Activated CD4-positive, alpha-beta T cell treated with anti-CD3 and anti-CD28 coated beads for 36 hours (primary cell): ENCODE measurements at regions of chr1 and their contacts with region 1.

Region 1: GRCh38 chr1:151327223-151327902 is at the start of gene PI4KB:
- DNase-seq: peak; percentile 92
- ATAC-seq: peak; percentile 94
- H3K4me3 Mint-ChIP-seq: peak within 1 kb of the TSS; percentile 92
- H3K27ac Mint-ChIP-seq: peak within 1 kb of the TSS; percentile 95
- H3K4me1 Mint-ChIP-seq: peaks cover 30% of the 10 kb centered on the region
- H3K27me3 Mint-ChIP-seq: no peaks in the 10 kb centered on the region
- total RNA-seq, gene PI4KB: 53.0 to 54.5 TPM

Region 2: GRCh38 chr1:151189638-151190445 is 137.5 kb before region 1 on chr1 and contains the start of gene VPS72:
- CTCF ChIA-PET with region 1: no interaction called
- POLR2A ChIA-PET with region 1: no interaction called
- intact Hi-C with region 1: loop called (anchors 1 to 5 kb)
- DNase-seq: peak; percentile 93
- ATAC-seq: peak; percentile 96
- H3K4me3 Mint-ChIP-seq: peak within 1 kb of the TSS; percentile 96
- H3K27ac Mint-ChIP-seq: peak within 1 kb of the TSS; percentile 98
- H3K4me1 Mint-ChIP-seq: peaks cover 27% of the 10 kb centered on the region
- H3K27me3 Mint-ChIP-seq: no peaks in the 10 kb centered on the region
- total RNA-seq, gene VPS72: 77.1 to 77.8 TPM

Region 3: DNA sequence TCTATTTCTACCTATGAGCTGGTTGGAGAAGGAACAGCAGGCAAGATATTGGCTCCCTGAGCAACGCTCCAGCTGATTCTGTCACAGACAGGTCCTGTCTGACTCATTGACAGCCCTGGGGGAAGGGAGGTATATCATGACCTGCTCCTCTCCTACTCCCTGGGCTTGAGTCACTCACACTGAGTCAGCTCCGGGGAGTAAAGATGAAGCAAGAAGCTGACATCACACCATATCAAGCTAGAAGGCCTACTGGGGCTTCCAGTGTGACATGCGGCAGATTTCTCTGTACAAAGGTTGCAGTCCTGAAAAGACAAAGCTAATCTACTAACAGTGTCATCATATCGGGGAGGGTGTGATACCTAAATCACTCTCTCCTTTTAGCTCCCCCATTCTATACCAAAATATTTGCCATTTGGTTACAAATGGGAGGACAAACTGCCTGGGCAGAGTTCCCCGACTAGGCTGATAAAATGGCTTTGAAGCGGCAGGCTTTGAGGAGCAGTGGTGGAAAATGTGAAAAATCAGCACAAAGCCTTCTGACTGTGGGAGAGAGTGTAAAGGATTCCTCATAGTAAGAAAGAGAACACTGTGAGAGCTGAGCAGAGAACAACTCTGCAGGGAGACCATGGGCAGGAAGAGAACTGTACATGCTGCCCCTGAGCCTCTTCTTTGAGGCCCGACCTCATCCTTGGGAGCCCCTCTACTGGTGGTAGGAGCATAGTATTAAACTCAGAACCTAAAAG is 15.6 kb before region 1 on chr1:
- CTCF ChIA-PET with region 1: interaction called, 76 read pairs
- POLR2A ChIA-PET with region 1: interaction called, 29 read pairs
- intact Hi-C with region 1: loop called (anchors 1 kb)
- DNase-seq: peak; percentile 92
- ATAC-seq: peak; percentile 99
- H3K4me3 Mint-ChIP-seq: peak overlapping the region; percentile 13
- H3K27ac Mint-ChIP-seq: peak overlapping the region; percentile 99
- H3K4me1 Mint-ChIP-seq: peaks cover 41% of the 10 kb centered on the region
- H3K27me3 Mint-ChIP-seq: no peaks in the 10 kb centered on the region

Region 4: DNA sequence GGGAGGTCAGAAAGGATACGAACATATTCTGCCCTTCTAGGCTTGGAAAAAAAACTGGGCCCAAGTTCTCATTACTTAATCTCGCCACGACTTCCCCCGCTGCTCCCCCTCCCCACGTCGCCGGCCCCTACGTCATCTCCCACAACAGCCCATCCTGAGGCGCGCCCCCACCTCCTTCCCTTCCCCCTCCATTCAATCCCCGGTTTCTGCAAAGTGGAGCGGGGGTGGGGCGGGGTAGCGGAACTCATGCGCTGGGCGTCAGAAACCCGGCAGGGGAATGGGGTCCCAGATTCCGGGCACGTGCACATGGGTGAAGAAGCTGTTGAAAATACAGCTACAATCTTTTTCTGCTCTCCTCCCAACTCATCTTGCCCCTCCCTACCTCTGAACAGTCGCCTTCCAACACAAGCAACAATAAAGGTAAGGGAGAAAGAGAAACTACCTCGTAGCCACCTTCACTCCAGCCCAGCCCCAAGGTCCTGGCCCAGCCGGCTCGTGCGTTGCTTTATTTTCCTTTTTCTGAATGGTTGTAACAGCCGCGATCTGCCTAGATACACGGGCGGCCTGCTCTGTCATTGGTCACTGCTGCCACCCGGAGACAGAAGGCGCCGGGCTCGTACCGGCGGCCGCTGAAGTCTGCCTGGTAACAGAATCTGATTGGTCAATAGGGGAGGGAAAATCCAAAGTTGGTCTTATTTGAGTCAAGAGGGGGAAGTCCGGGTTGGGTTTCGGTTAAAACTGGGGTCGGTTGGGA is 19.6 kb after region 1 on chr1 and contains the start of gene RFX5:
- CTCF ChIA-PET with region 1: interaction called, 80 read pairs
- POLR2A ChIA-PET with region 1: interaction called, 3 read pairs
- intact Hi-C with region 1: loop called (anchors 1 kb)
- DNase-seq: peak; percentile 96
- ATAC-seq: peak; percentile 98
- H3K4me3 Mint-ChIP-seq: peak within 1 kb of the TSS; percentile 96
- H3K27ac Mint-ChIP-seq: peak within 1 kb of the TSS; percentile 94
- H3K4me1 Mint-ChIP-seq: peaks cover 31% of the 10 kb centered on the region
- H3K27me3 Mint-ChIP-seq: no peaks in the 10 kb centered on the region
- total RNA-seq, gene RFX5: 47.6 to 50.4 TPM

Region 5: DNA sequence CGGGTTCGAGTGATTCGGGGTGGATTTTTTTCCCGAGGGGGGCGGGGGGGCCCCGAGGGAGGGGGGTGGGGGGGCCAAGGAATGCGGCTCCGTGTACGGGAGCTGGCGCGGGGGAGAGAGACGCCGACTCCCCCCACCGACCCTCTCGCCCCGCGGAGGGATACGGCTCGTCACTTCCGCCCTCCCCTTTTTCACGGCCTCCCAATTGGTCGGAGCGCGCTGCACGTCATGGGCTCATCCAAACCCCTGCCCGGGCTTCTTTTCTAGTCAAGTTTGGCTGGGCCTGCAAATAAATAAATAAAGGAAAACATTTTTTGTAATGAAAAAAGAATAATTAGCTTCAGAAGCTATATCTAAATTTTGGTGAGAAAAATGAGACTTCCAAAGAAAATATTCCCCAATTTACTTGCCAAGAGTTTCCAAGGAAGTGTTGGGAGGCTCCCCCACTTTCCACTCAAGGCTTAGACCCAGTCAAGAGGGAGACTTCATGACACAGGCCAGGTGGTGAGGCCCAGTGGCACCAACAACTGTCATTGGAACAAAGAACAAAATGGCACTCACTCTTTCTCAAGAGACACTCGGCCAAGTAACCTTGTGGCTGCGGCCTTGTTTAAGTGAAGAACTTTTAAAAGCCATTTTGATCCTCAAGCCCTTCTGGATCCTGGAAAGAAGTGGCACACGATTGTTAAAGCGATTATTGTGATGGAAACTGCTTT is 132.1 kb after region 1 on chr1 and contains the start of gene POGZ:
- CTCF ChIA-PET with region 1: no interaction called
- POLR2A ChIA-PET with region 1: no interaction called
- intact Hi-C with region 1: loop called in 1 of 2 experiments (anchors 1 kb)
- DNase-seq: peak; percentile 97
- ATAC-seq: peak; percentile 80
- H3K4me3 Mint-ChIP-seq: peak within 1 kb of the TSS; percentile 83
- H3K27ac Mint-ChIP-seq: peak within 1 kb of the TSS; percentile 94
- H3K4me1 Mint-ChIP-seq: peaks cover 24% of the 10 kb centered on the region
- H3K27me3 Mint-ChIP-seq: peaks cover 19% of the 10 kb centered on the region
- total RNA-seq, gene POGZ: 81.3 to 104 TPM

Region 6: GRCh38 chr1:151762941-151763921 is 435.9 kb after region 1 on chr1 and contains the start of gene MRPL9:
- CTCF ChIA-PET with region 1: no interaction called
- POLR2A ChIA-PET with region 1: no interaction called
- intact Hi-C with region 1: loop called in 1 of 2 experiments (anchors 2 kb)
- DNase-seq: peak; percentile 94
- ATAC-seq: peak; percentile 99
- H3K4me3 Mint-ChIP-seq: peak within 1 kb of the TSS; percentile 89
- H3K27ac Mint-ChIP-seq: peak within 1 kb of the TSS; percentile 95
- H3K4me1 Mint-ChIP-seq: peaks cover 24% of the 10 kb centered on the region
- H3K27me3 Mint-ChIP-seq: no peaks in the 10 kb centered on the region
- total RNA-seq, gene MRPL9: 139 to 184 TPM